ENCODE measurements at regions of chr10 and their contacts with region 1.

Region 1: GRCh38 chr10:12333380-12334185 is 15.8 kb upstream of the CAMK1D start:
- DNase-seq: peak; percentile 71
- ATAC-seq: peak; percentile 92
- H3K4me3 Mint-ChIP-seq: no peak overlapping the region
- H3K27ac Mint-ChIP-seq: no peak overlapping the region
- H3K4me1 Mint-ChIP-seq: peaks cover 15% of the 10 kb centered on the region
- H3K27me3 Mint-ChIP-seq: no peaks in the 10 kb centered on the region

Region 2: GRCh38 chr10:12308057-12308456 is 25.5 kb before region 1 on chr10:
- CTCF ChIA-PET with region 1: no interaction called
- POLR2A ChIA-PET with region 1: no interaction called
- intact Hi-C with region 1: loop called in 1 of 2 experiments (anchors 2 kb)
- DNase-seq: peak; percentile 40
- ATAC-seq: peak; percentile 28
- H3K4me3 Mint-ChIP-seq: no peak overlapping the region
- H3K27ac Mint-ChIP-seq: no peak overlapping the region
- H3K4me1 Mint-ChIP-seq: peaks cover 16% of the 10 kb centered on the region
- H3K27me3 Mint-ChIP-seq: no peaks in the 10 kb centered on the region

Region 3: GRCh38 chr10:12897278-12897677 is 563.7 kb after region 1 on chr10:
- CTCF ChIA-PET with region 1: no interaction called
- POLR2A ChIA-PET with region 1: no interaction called
- intact Hi-C with region 1: no loop called
- DNase-seq: no peak
- ATAC-seq: no peak
- H3K4me3 Mint-ChIP-seq: no peak overlapping the region
- H3K27ac Mint-ChIP-seq: no peak overlapping the region
- H3K4me1 Mint-ChIP-seq: no peaks in the 10 kb centered on the region
- H3K27me3 Mint-ChIP-seq: peaks cover 11% of the 10 kb centered on the region

Measured in activated CD4-positive, alpha-beta T cell treated with anti-CD3 and anti-CD28 coated beads for 36 hours (primary cell).